Dendritic cell treated with granulocyte-macrophage colony-stimulating factor and Interleukin-4, amounts not matched to agents 40 ng/mL and 50 ng/mL, for 4 days (primary cell): ENCODE measurements at regions of chr10 and their contacts with region 1.

Region 1: DNA sequence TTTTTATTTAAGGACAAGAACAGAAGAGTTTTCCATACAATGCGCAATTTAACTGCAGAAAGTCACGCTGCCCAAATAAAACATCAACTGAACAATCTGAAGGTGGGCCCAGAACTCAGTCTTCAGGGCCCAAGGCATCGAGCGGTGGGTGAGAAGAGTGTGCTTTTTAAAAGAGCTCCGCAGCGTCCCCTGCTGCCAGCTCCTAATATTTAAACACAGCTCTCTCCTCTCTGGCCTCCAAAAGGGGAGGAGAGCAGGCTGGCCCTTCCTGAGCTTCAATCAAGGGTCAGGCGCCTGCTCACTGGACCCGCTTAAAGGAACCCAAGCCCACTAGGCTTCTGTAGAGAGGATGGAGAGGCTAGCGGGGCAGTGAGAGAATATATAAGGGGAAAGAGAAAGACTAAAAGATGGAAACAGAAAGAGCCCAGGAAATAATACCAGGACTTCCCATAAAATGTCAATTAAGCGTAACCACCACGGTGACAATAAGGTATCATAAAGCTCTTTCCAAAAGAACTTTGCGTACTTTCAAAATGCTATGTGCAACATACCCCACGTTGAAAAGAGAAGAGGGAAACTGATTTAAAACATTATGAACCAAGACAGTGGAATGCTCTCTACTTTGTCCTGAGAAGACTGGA is 2.8 kb downstream of the FAM53B start:
- H3K4me3 Mint-ChIP-seq: peak overlapping the region; percentile 72
- H3K27ac Mint-ChIP-seq: peak overlapping the region; percentile 75
- H3K4me1 Mint-ChIP-seq: peaks cover 70% of the 10 kb centered on the region
- H3K27me3 Mint-ChIP-seq: no peaks in the 10 kb centered on the region

Region 2: DNA sequence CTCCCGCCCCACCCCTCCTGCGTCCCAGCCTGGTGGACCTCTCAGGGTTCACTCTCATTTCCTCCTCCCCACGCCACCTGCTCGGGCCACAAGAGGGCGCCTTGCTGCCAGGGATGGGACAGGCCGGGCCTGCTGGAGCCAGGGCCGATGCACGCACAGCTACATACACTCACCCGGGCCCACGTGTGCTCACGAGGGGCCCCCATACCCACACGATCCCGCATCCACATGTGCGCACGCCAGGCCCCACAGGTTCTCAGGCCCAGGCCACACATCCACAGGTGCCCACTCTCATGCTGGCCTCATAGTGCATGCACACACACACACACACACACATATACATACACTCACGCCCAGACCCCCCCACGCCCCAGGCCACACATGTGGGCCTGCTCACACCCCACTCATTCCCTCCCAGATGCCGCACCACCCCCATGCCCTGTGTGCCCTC is 211.2 kb before region 1 on chr10:
- intact Hi-C with region 1: loop called (anchors 1 kb)
- H3K4me3 Mint-ChIP-seq: no peak overlapping the region
- H3K27ac Mint-ChIP-seq: no peak overlapping the region
- H3K4me1 Mint-ChIP-seq: peaks cover 20% of the 10 kb centered on the region
- H3K27me3 Mint-ChIP-seq: no peaks in the 10 kb centered on the region

Region 3: GRCh38 chr10:124647421-124648130 is 93.8 kb before region 1 on chr10:
- intact Hi-C with region 1: loop called (anchors 2 kb)
- H3K4me3 Mint-ChIP-seq: peak overlapping the region; percentile 51
- H3K27ac Mint-ChIP-seq: peak overlapping the region; percentile 83
- H3K4me1 Mint-ChIP-seq: peaks cover 96% of the 10 kb centered on the region
- H3K27me3 Mint-ChIP-seq: no peaks in the 10 kb centered on the region

Region 4: DNA sequence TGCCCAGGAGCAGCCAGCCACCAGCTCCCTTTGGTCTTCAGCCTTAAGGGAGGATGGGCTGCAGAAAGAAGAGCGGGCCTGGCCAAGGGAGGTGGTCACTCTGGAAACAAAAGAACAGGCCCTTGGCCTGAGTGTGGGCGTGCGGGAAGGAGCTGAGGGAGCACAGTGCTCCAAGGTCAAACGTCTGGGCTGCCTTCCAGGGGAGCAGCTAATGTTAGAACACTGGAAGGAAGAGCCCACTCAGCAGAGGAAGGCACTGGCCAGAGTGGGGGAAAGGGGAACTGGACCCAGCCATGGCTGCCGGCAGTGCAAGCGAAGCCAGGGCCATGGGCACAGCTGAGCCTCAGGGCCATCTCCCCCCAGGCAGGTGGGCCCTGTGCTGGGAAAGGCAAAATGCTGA is 40.0 kb before region 1 on chr10:
- intact Hi-C with region 1: loop called (anchors 5 kb)
- H3K4me3 Mint-ChIP-seq: peak overlapping the region; percentile 7
- H3K27ac Mint-ChIP-seq: peak overlapping the region; percentile 97
- H3K4me1 Mint-ChIP-seq: peaks cover 99% of the 10 kb centered on the region
- H3K27me3 Mint-ChIP-seq: no peaks in the 10 kb centered on the region

Region 5: DNA sequence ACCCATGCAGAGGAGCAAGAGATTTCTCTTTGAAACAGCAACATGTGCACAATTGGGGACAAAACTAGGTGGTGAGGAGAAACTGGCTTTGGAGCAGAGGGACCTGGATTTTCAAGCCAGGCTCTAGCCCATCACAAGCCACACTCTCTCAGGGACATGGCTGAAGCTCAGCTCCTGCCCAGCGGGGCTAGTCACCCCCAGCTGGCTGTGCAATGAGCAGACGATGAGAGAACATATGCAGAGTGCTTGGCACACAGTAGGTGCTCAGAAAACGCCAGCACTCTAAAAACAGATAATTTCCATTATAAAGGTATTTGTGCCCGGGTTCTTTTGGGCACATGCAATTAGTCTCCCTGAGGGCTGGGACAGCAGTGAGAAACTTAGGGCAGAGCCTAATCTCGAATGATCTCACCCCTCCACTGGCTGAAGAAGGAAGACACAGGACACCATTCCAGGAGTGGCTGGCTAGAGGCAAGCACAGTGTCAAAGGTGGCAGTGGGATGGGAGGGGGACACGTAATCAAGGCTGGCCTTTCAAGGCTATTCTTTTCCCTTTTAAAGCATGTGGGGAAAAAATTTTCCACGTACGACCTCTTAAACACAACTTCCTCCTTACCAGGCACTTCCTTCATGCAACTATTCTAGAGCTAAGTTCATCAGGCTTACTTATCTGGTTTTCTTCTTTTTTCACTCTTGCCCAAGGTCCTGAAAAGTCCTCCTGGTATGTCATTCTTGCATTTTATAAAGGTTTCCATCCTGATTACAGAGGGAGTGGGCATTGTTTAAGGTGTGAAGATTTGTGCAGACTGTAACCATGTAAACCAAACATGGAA is 12.4 kb before region 1 on chr10:
- intact Hi-C with region 1: loop called (anchors 1 kb)
- H3K4me3 Mint-ChIP-seq: peak overlapping the region; percentile 23
- H3K27ac Mint-ChIP-seq: peak overlapping the region; percentile 93
- H3K4me1 Mint-ChIP-seq: peaks cover 88% of the 10 kb centered on the region
- H3K27me3 Mint-ChIP-seq: no peaks in the 10 kb centered on the region

Region 6: DNA sequence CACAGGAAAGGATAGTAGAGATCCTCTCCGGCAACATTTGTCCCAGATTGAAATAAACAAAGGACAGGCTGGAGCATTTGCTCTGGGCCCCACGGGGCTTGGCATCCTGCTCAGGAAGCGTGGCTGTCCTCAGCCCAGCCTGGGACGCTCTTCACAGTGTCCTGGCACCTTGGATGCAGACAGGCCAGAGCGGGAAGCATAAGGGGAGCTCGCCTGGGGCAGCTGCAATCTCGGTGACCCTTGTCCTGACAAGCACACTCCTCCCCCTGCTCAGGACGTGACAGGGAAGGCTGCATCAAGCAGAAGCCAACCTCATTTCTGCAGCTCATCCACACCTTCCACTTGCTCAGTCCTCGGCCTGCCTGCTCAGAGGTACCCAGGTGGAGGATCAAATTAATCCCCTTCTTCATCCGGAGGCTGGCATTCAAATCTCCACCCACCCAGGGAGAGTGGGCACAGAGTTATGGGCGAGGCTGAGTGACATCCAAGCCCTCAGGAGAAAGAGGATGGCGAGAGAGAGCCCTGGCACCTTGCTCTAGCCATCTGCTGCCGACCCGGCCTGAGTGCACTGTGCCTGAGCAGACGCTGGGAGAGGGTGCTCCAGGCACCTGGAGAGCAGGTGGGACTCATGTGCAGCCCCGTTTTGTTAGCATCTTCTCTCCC is 107.8 kb after region 1 on chr10:
- intact Hi-C with region 1: no loop called
- H3K4me3 Mint-ChIP-seq: no peak overlapping the region
- H3K27ac Mint-ChIP-seq: no peak overlapping the region
- H3K4me1 Mint-ChIP-seq: no peaks in the 10 kb centered on the region
- H3K27me3 Mint-ChIP-seq: no peaks in the 10 kb centered on the region